Sigmoid colon (tissue), 7 donors: ENCODE measurements at regions of chr2 and their contacts with region 1.

Region 1: GRCh38 chr2:61538200-61538919 is at the start of gene XPO1:
- DNase-seq: peak; percentile 100
- H3K4me3 ChIP-seq: peak within 1 kb of the TSS; percentile 74 to 93 (median 87)
- H3K27ac ChIP-seq: peak within 1 kb of the TSS; percentile 87 to 99 (median 96)
- H3K4me1 ChIP-seq: peaks cover 0 to 34% (median 31%) of the 10 kb centered on the region in 4 donors
- H3K27me3 ChIP-seq: no peaks in the 10 kb centered on the region
- CTCF ChIP-seq: no peak
- EP300 ChIP-seq: peak in 2 of 4 donors; percentile 25 to 65
- POLR2A ChIP-seq: peak; percentile 93 to 96
- total RNA-seq, gene XPO1: 90.6 to 460 (median 113) TPM

Region 2: GRCh38 chr2:60881047-60881932 is 657.1 kb before region 1 on chr2 and contains the start of gene REL:
- intact Hi-C with region 1: loop called (anchors 10 kb)
- DNase-seq: peak; percentile 95
- H3K4me3 ChIP-seq: peak within 1 kb of the TSS; percentile 69 to 95 (median 90)
- H3K27ac ChIP-seq: peak within 1 kb of the TSS; percentile 93 to 99 (median 97)
- H3K4me1 ChIP-seq: peaks cover 0 to 44% (median 22%) of the 10 kb centered on the region in 4 donors
- H3K27me3 ChIP-seq: no peaks in the 10 kb centered on the region
- CTCF ChIP-seq: peak in 1 of 4 experiments; percentile 20
- EP300 ChIP-seq: no peak
- POLR2A ChIP-seq: peak; percentile 72 to 86
- total RNA-seq, gene REL: 11.0 to 14.7 (median 12.5) TPM

Region 3: DNA sequence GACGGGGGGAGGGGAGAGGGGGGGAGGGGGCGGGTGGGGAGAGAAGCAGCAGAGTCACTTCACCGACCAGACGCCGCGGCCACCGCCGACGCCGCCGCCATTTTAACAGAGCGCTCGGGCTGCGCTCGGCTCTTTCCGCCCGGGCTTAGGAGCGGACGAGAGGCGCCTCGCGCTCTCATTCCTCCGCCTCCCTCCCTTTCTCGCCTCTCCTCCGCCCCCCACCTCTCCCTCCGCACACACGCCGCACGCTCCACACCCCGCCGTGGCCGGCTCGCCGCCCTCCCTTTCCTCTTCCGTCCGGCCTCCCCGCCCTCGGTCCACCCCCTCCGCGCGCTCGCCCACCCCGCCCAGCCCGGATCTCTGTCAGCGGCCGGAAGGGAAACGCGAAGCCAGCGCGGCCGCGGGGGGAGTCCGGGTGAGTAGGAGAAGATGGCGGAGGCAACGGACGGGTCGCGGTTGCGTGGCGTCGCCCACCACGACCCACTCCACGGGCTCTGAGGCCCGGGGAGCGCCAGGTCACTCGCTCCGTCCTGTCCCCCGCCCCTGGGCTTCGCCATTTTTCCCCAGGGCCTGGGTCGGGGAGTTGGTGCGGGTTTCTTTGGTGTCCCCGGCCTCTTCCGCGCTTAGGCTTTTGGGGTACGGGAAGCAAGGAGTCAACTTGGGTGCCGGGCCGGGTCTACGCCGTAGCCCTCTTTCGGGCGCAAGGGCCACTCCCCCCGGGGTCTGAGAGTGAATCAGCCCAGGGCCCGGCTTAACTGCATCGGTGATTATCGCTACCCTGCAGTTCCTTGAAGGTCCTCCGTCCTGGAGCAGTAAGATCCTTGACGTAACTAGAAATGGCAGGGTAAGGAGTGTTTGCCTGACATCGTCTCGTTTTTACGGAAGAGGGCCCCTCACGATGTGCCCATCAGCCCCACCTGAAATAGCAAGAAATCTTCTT is 67.1 kb before region 1 on chr2 and contains the start of gene USP34:
- intact Hi-C with region 1: loop called (anchors 1 kb)
- DNase-seq: peak; percentile 97
- H3K4me3 ChIP-seq: peak within 1 kb of the TSS; percentile 79 to 90 (median 84)
- H3K27ac ChIP-seq: peak within 1 kb of the TSS; percentile 95 to 99 (median 97)
- H3K4me1 ChIP-seq: peaks cover 0 to 40% (median 30%) of the 10 kb centered on the region in 4 donors
- H3K27me3 ChIP-seq: no peaks in the 10 kb centered on the region
- CTCF ChIP-seq: no peak
- EP300 ChIP-seq: peak in 1 of 4 donors; percentile 12
- POLR2A ChIP-seq: peak; percentile 75 to 79
- total RNA-seq, gene USP34: 135 to 158 (median 140) TPM

Region 4: DNA sequence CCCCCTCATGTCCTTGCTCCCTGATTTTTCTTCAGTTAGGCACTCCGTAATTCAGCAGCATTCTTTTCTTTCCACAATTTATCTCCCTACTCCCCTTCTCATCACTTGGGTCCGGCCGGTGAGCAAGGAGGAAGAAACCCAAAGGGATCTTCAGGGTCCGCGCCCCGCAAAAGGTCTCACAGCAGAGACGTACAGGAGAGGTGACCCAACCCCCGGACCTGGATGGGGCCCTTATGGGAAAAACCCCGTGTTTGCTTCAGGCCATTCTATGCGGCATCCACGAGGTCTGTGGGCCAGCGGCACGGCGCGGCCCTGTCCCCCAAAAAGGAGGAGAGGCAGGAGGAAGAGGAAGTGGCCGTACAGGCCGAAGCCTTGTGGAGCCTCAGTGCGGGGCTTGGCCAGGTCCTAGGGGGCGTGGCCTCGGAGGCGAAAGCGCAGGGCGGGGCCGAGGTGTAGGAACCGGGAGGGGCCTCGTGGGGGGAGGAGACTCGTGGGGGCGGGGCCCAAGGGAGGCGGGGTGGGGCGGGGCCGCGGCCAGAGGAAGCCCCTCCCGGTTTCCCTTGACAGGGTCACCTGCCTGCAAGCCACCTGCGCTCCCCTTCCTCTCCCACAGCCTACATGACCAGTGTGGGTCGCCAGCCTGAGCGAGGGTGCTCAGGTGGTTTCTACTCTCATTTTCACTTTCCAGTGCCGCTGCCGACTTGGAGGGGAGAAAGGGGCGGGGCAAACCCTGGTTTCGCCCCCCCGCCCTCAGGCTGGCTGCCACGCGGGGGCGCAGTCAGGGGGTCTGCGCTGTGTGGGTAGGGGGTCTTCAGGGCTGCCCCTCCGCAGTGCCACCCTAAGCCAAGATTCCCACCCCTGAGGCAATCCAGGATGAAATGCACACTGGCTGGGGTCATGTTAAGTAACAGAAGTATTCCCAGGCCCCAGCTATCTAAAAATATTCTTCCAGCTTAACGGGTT is 156.2 kb after region 1 on chr2:
- intact Hi-C with region 1: loop called (anchors 1 kb)
- DNase-seq: peak; percentile 97
- H3K4me3 ChIP-seq: peak overlapping the region; percentile 80 to 88 (median 85)
- H3K27ac ChIP-seq: peak overlapping the region; percentile 82 to 86 (median 84)
- H3K4me1 ChIP-seq: peaks cover 0 to 14% (median 12%) of the 10 kb centered on the region in 4 donors
- H3K27me3 ChIP-seq: no peaks in the 10 kb centered on the region
- CTCF ChIP-seq: peak; percentile 5 to 49 (median 25)
- EP300 ChIP-seq: no peak
- POLR2A ChIP-seq: peak; percentile 33 to 60

Region 5: GRCh38 chr2:61854474-61855182 is 316.3 kb after region 1 on chr2:
- intact Hi-C with region 1: loop called (anchors 5 kb)
- DNase-seq: peak; percentile 95
- H3K4me3 ChIP-seq: peak overlapping the region; percentile 66 to 87 (median 77)
- H3K27ac ChIP-seq: peak overlapping the region; percentile 88 to 91 (median 90)
- H3K4me1 ChIP-seq: peaks cover 0 to 14% (median 13%) of the 10 kb centered on the region in 4 donors
- H3K27me3 ChIP-seq: no peaks in the 10 kb centered on the region
- CTCF ChIP-seq: no peak
- EP300 ChIP-seq: no peak
- POLR2A ChIP-seq: no peak